CD4-positive, alpha-beta memory T cell (primary cell): ENCODE measurements at regions of chr3 and their contacts with region 1.

Region 1: DNA sequence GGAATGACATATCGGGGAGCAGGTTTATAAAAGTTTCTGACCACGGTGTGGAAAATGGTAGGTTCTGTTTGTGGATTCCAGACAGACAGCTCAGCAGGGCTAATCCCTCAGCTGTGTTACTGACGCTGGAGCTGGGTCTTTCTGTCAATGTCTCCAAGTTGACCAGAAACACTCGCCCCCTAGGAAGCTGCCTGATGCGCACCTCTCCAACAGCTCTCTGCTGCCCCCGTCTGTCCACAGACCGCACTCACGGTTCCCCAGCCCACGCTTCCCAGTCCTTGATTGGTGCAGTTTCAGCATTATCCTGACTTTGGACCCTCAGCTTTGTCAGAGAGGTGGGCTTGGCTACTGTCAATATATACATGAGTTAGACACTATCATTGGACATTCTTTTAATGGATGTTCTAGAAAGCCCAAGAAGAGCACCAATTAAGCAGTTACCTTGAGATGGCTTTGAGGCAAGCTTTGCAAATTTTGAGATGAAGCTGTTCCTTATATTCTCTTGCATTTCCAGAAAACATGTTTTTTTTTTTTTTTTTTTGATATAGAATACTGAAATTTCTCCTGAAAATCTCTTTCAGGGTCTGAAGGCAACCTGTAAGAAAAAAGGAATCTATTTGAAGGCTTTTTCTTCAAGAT is 98.9 kb upstream of the TBC1D5 start:
- DNase-seq: peak in 4 of 5 donors; percentile 47 to 57 (median 52)
- H3K4me3 ChIP-seq: no peak overlapping the region
- H3K4me3 Mint-ChIP-seq: no peak overlapping the region
- H3K27ac ChIP-seq: no peak overlapping the region
- H3K27ac Mint-ChIP-seq: no peak overlapping the region
- H3K4me1 ChIP-seq: no peaks in the 10 kb centered on the region
- H3K4me1 Mint-ChIP-seq: no peaks in the 10 kb centered on the region
- H3K27me3 ChIP-seq: no peaks in the 10 kb centered on the region
- H3K27me3 Mint-ChIP-seq: peaks cover 0 to 9% of the 10 kb centered on the region in 2 donors

Region 2: DNA sequence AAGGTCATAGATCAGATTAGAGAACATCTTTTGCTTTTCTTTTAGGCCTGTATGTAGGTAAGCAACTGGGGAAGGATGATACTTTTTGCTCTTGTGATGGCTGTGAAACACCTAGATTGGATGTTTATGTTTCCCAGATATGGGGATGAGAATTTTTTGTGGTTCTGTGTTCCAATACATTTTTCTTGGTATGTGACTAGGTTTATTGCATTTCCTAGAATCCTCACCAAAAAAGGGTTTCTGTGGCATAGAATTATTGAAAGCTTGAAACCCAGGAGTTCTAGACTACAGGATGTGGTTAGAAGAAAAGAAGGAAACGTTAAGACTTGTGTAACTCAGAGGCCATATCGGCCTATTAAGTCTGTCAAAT is 1550.5 kb before region 1 on chr3:
- CTCF ChIA-PET with region 1: no interaction called
- POLR2A ChIA-PET with region 1: no interaction called
- intact Hi-C with region 1: no loop called
- DNase-seq: peak in 4 of 5 donors; percentile 55 to 59 (median 57)
- H3K4me3 ChIP-seq: peak overlapping the region in 1 of 2 donors; percentile 36
- H3K4me3 Mint-ChIP-seq: peak overlapping the region; percentile 93 to 99 (median 98)
- H3K27ac ChIP-seq: peak overlapping the region; percentile 32
- H3K27ac Mint-ChIP-seq: peak overlapping the region; percentile 90 to 99 (median 95)
- H3K4me1 ChIP-seq: peaks cover 78% of the 10 kb centered on the region
- H3K4me1 Mint-ChIP-seq: peaks cover 50 to 82% (median 72%) of the 10 kb centered on the region in 4 donors
- H3K27me3 ChIP-seq: no peaks in the 10 kb centered on the region
- H3K27me3 Mint-ChIP-seq: no peaks in the 10 kb centered on the region

Region 3: DNA sequence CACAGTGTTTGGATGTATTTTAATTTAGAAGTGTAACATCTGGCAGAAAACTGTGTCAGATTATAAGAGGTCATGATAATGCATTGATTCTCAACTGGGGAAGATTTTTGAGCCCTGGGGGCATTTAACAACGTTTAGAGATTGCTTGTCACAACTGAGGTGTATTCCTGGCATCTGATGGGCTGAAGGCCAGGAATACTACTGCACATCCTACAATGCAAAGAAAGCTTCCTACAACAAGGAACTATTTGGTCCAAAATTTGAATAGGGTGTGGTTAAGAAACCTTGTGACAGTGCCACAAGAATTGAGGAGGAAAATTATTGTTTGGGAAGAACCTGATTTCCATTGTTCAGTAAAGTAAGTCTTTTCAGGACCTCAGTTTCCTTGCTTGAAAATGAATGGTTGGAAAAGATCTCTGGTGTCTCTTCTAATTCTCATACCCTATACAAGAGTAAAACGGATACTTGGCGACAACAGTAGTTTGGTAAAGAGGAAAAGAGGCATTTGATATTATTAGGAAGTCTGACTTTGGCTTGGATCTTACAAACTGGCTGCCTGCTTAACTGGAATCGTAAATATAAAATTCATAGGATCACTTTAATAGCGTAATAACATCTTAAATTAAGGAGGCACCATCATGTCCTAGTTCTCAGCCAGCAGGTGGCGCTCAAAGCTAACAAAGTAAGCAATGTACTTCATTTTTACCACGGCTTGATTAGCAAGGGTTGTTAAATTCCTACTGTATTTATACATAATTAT is 1240.3 kb before region 1 on chr3:
- CTCF ChIA-PET with region 1: interaction called, 40 read pairs
- POLR2A ChIA-PET with region 1: no interaction called
- intact Hi-C with region 1: loop called (anchors 1 kb)
- DNase-seq: peak; percentile 72 to 76 (median 72)
- H3K4me3 ChIP-seq: no peak overlapping the region
- H3K4me3 Mint-ChIP-seq: no peak overlapping the region
- H3K27ac ChIP-seq: no peak overlapping the region
- H3K27ac Mint-ChIP-seq: peak overlapping the region in 1 of 7 donors; percentile 36
- H3K4me1 ChIP-seq: peaks cover 10% of the 10 kb centered on the region
- H3K4me1 Mint-ChIP-seq: peaks cover 3 to 13% (median 8%) of the 10 kb centered on the region in 4 donors
- H3K27me3 ChIP-seq: no peaks in the 10 kb centered on the region
- H3K27me3 Mint-ChIP-seq: peaks cover 0 to 2% of the 10 kb centered on the region in 2 donors

Region 4: GRCh38 chr3:17412950-17413530 is 428.3 kb before region 1 on chr3:
- CTCF ChIA-PET with region 1: interaction called, 7 read pairs
- POLR2A ChIA-PET with region 1: no interaction called
- intact Hi-C with region 1: loop called (anchors 5 kb)
- DNase-seq: peak in 4 of 5 donors; percentile 44 to 53 (median 49)
- H3K4me3 ChIP-seq: no peak overlapping the region
- H3K4me3 Mint-ChIP-seq: no peak overlapping the region
- H3K27ac ChIP-seq: no peak overlapping the region
- H3K27ac Mint-ChIP-seq: peak overlapping the region in 1 of 7 donors; percentile 31
- H3K4me1 ChIP-seq: no peaks in the 10 kb centered on the region
- H3K4me1 Mint-ChIP-seq: peaks cover 0 to 8% (median 2%) of the 10 kb centered on the region in 4 donors
- H3K27me3 ChIP-seq: no peaks in the 10 kb centered on the region
- H3K27me3 Mint-ChIP-seq: no peaks in the 10 kb centered on the region

Region 5: GRCh38 chr3:17639765-17640164 is 201.5 kb before region 1 on chr3:
- CTCF ChIA-PET with region 1: interaction called, 131 read pairs
- POLR2A ChIA-PET with region 1: interaction called, 6 read pairs
- intact Hi-C with region 1: no loop called
- DNase-seq: no peak
- H3K4me3 ChIP-seq: no peak overlapping the region
- H3K4me3 Mint-ChIP-seq: no peak overlapping the region
- H3K27ac ChIP-seq: no peak overlapping the region
- H3K27ac Mint-ChIP-seq: no peak overlapping the region
- H3K4me1 ChIP-seq: no peaks in the 10 kb centered on the region
- H3K4me1 Mint-ChIP-seq: peaks cover 3 to 10% (median 5%) of the 10 kb centered on the region in 4 donors
- H3K27me3 ChIP-seq: no peaks in the 10 kb centered on the region
- H3K27me3 Mint-ChIP-seq: no peaks in the 10 kb centered on the region

Region 6: GRCh38 chr3:17687566-17687965 is 153.7 kb before region 1 on chr3:
- CTCF ChIA-PET with region 1: interaction called, 19 read pairs
- POLR2A ChIA-PET with region 1: interaction called, 4 read pairs
- intact Hi-C with region 1: no loop called
- DNase-seq: no peak
- H3K4me3 ChIP-seq: no peak overlapping the region
- H3K4me3 Mint-ChIP-seq: no peak overlapping the region
- H3K27ac ChIP-seq: no peak overlapping the region
- H3K27ac Mint-ChIP-seq: peak overlapping the region in 1 of 7 donors; percentile 4
- H3K4me1 ChIP-seq: no peaks in the 10 kb centered on the region
- H3K4me1 Mint-ChIP-seq: peaks cover 4 to 11% (median 7%) of the 10 kb centered on the region in 4 donors
- H3K27me3 ChIP-seq: no peaks in the 10 kb centered on the region
- H3K27me3 Mint-ChIP-seq: no peaks in the 10 kb centered on the region

Region 7: DNA sequence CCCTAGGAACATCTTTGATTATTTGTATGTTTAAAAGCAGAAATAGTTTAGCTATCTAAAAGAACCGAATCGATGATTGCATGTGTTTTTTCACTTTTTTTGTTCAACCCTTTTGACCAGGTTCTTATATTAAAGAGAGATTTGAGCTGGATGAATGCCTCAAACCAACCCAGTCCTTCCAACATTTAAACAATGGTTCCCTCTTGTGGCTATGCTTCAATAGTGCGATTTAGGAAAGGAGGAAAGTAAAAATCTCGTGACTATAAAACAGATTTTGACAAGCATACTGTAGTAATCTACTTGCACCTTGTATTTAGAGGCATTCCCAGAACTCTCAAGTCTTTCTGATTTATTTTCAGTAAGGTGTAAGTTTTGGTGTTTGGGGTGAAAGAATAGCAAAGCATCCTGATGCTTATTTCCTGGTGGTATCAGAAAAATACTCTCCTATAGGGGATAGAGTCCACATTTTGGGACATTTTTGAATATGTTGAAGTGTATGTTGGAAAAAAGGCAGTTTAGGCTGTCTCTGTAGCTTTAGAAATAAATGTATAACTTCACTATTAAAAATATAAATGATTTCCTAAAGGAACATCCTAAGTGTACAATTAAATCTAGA is 1147.4 kb after region 1 on chr3:
- CTCF ChIA-PET with region 1: no interaction called
- POLR2A ChIA-PET with region 1: no interaction called
- intact Hi-C with region 1: loop called (anchors 1 kb)
- DNase-seq: peak in 4 of 5 donors; percentile 22 to 33 (median 32)
- H3K4me3 ChIP-seq: no peak overlapping the region
- H3K4me3 Mint-ChIP-seq: peak overlapping the region in 4 of 8 donors; percentile 2 to 52 (median 19)
- H3K27ac ChIP-seq: no peak overlapping the region
- H3K27ac Mint-ChIP-seq: no peak overlapping the region
- H3K4me1 ChIP-seq: no peaks in the 10 kb centered on the region
- H3K4me1 Mint-ChIP-seq: peaks cover 2 to 15% (median 12%) of the 10 kb centered on the region in 4 donors
- H3K27me3 ChIP-seq: peaks cover 6% of the 10 kb centered on the region
- H3K27me3 Mint-ChIP-seq: peaks cover 18 to 27% of the 10 kb centered on the region in 2 donors